GM10248 (cell line): ENCODE measurements at regions of chr15 and their contacts with region 1.

Region 1: DNA sequence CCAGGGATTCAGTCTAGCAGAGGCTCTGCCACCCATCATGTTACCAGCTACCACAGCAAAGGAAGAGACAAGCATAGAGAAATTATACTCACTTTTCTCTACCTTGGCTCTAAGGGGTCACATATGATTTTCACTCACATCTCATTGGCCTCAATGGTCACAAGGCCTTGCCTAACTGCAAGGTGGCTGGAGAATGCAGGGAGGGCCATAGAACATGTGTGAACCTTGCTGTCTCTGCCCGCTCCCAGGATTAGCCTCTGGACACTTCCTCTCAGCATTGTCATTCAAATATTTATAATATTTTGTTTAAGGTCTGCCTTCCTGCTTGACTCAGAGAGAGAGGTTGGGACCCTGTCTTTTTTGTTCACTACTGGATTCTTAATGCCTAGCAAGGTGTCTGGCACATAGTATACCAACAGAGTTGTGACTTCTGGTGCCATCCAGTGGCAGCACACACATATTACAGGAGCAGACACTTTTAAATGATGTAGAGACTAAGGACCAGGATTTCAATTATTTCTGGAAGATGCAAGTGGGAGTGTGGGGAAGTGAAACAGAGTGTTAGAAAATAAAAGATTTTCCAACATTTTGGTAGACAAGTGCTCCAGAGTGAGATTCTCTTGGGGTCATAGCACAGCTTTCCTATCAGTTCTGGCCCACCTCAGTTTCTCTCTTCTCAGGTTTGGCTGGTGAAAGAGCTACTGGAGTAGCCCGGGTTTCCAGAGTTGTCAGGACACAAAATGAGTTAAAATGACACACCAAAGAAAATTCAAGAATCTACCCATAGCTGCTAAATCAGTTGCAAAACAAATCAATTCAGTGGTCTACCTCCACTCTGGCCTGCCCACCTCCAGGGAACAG is 119.0 kb upstream of the RASGRP1 start:
- DNase-seq: peak; percentile 52
- CTCF ChIP-seq: peak; percentile 82

Region 2: DNA sequence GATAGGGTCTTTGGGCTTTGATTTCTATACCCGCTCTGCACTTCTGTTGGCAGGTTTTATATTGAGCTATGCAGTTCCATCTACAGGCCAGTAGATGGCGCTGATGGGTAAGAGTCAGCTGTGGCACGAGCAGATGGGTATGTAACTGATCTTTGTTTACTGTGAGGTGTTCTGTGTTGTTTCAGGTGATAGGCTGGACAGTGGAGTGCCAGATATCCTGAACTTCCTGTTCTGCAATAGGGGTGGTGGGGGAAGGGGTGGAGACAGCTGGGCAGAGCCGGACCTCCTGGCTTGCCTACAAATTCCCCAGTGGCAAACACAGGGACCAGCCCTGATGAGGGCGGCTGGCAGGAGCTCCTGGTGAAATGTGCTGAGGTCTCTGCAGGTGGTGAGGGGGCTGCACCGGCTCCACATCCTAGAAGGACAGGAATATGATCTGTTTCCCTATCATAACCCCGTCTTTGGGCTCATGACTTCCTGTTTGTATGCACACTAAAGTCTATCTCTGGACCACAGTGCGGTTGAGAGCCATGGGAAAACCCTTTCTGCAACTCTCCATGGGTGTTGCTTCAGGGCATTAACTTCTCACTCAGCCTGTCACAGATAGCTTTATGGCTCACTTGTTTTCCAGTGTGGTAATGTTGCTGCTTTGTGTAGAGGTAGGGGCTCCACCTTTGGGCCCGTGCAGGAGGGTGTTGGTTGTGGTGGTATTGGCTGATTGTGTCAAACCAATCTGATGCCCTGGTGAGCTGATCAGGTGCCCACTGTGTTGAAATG is 243.1 kb before region 1 on chr15:
- CTCF ChIA-PET with region 1: interaction called, 152 read pairs
- POLR2A ChIA-PET with region 1: no interaction called
- DNase-seq: peak; percentile 55
- CTCF ChIP-seq: peak; percentile 92

Region 3: DNA sequence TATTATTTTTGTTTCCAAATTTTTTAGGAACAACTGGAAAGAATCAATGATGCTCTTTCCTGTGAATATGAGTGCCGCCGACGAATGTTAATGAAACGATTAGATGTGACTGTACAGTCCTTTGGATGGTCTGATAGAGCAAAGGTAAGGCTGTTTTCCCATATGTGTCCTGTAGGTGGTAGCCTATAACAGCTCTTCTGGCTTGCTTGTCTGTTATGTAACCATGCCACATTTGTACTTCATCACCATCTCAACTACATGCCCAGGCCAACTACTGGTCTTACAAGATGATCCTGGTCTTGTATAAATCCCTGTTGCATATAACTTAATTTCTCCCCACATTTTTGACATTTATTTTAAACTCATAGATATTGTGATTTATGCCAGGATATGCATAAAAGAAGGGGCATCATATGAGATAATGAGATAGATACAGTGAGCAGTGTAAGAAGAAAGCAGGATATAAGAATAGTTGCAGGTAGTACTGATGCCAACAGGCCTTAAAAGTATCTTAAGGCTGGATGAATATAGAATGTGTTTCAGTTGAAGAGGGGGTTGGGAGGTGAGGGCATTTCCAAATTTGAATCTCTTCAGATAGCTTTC is 209.4 kb before region 1 on chr15:
- CTCF ChIA-PET with region 1: interaction called, 129 read pairs
- POLR2A ChIA-PET with region 1: no interaction called
- DNase-seq: peak; percentile 49
- CTCF ChIP-seq: peak; percentile 54

Region 4: DNA sequence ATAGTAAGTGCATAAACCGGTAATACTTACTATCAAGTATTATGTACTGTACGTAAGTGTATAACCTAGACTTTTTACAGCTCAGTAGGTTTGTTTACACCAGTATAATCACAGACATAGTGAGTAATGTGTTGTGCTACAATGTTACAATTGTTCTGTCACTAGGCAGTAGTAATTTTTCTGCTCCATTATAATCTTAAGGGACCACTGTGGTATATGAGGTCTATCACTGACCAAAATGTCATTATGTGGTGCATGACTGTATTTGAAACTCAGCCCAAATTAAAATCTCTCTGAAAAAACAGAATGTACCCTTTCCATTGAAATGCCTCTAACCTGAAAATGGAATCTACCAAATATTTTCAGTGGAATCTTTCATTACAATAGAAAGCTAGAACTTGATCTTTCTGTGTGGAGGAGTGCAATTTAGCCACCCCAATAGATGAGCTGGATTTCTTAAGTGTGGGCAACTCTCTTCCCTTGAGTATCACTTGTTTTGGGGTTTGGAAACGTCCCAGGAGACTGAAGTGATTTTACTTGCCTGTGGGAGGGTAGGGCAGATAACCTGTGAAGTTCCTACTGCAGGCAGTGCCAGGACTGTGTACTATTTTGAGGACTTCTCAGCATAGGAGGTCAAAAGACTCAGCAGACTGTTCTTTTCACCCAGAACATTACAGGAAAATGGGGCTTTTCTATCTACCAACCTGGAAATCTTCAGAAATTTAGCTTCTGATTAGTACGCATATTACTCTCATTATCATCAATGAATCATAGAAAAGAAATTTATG is 178.7 kb before region 1 on chr15:
- CTCF ChIA-PET with region 1: interaction called, 17 read pairs
- POLR2A ChIA-PET with region 1: no interaction called
- DNase-seq: no peak
- CTCF ChIP-seq: no peak

Region 5: GRCh38 chr15:38647683-38648082 is 35.9 kb before region 1 on chr15:
- CTCF ChIA-PET with region 1: interaction called, 18 read pairs
- POLR2A ChIA-PET with region 1: no interaction called
- DNase-seq: no peak
- CTCF ChIP-seq: no peak

Region 6: GRCh38 chr15:38665586-38666305 is 17.9 kb before region 1 on chr15:
- CTCF ChIA-PET with region 1: interaction called, 122 read pairs
- POLR2A ChIA-PET with region 1: no interaction called
- DNase-seq: no peak
- CTCF ChIP-seq: no peak

Region 7: GRCh38 chr15:38699633-38700230 is 16.1 kb after region 1 on chr15:
- CTCF ChIA-PET with region 1: interaction called, 195 read pairs
- POLR2A ChIA-PET with region 1: no interaction called
- DNase-seq: peak; percentile 60
- CTCF ChIP-seq: peak; percentile 93